Activated T-helper 1 cell treated with anti-CD3 and anti-CD28 coated beads, Interleukin-12 subunit alpha, Interleukin-12 subunit beta, Interleukin-2, Interleukin-4 antibody, amounts not matched to agents 30 ng/mL and 10 ng/mL and 1 ng/mL, durations not matched to agents 14 hours and 24 hours and 36 hours (primary cell): ENCODE measurements at regions of chr20 and their contacts with region 1.

Region 1: GRCh38 chr20:49610701-49611538 is 43.0 kb upstream of the PTGIS start:
- DNase-seq: peak; percentile 75
- H3K4me3 Mint-ChIP-seq: peak overlapping the region; percentile 73
- H3K27ac Mint-ChIP-seq: peak overlapping the region; percentile 56
- H3K4me1 Mint-ChIP-seq: peaks cover 32% of the 10 kb centered on the region
- H3K27me3 Mint-ChIP-seq: no peaks in the 10 kb centered on the region

Region 2: GRCh38 chr20:49484180-49485140 is 126.5 kb before region 1 on chr20:
- intact Hi-C with region 1: loop called (anchors 5 kb)
- DNase-seq: peak; percentile 67
- H3K4me3 Mint-ChIP-seq: peak overlapping the region; percentile 85
- H3K27ac Mint-ChIP-seq: peak overlapping the region; percentile 66
- H3K4me1 Mint-ChIP-seq: peaks cover 9% of the 10 kb centered on the region
- H3K27me3 Mint-ChIP-seq: peaks cover 48% of the 10 kb centered on the region

Region 3: DNA sequence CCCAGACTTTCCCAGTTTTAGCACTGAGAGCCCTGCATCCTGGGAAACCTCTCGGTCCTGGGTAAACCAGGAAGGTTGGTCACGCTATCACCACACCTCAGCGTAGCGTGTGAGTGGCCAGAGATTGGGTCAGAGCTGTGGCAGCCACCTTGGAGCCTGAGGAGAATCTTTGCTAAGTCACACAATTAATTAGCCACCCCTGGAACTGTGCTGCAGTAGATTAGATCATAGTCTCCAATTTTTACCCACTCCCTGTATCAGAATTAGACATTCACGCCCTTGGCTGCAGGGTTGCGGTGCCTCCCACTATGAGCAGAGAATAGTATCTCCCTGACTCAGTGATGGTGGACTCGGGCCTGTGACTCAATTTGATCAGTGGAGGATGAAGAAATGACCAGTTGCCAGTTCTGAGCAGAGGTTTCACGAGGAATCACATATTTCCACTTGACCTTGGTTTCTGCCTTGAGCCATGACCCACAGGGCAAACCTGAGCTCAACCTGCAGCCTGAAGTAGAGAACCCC is 37.0 kb before region 1 on chr20:
- intact Hi-C with region 1: loop called (anchors 5 kb)
- DNase-seq: no peak
- H3K4me3 Mint-ChIP-seq: no peak overlapping the region
- H3K27ac Mint-ChIP-seq: peak overlapping the region; percentile 87
- H3K4me1 Mint-ChIP-seq: peaks cover 61% of the 10 kb centered on the region
- H3K27me3 Mint-ChIP-seq: peaks cover 18% of the 10 kb centered on the region

Region 4: GRCh38 chr20:49713753-49714712 is 103.1 kb after region 1 on chr20 and contains the start of gene B4GALT5:
- intact Hi-C with region 1: loop called (anchors 5 kb)
- DNase-seq: peak; percentile 60
- H3K4me3 Mint-ChIP-seq: peak within 1 kb of the TSS; percentile 92
- H3K27ac Mint-ChIP-seq: peak within 1 kb of the TSS; percentile 94
- H3K4me1 Mint-ChIP-seq: peaks cover 49% of the 10 kb centered on the region
- H3K27me3 Mint-ChIP-seq: peaks cover 5% of the 10 kb centered on the region
- total RNA-seq, gene B4GALT5: 38.9 and 39.3 TPM in 2 replicates

Region 5: GRCh38 chr20:49821870-49822331 is 211.0 kb after region 1 on chr20:
- intact Hi-C with region 1: loop called (anchors 1 kb)
- DNase-seq: no peak
- H3K4me3 Mint-ChIP-seq: peak overlapping the region; percentile 40
- H3K27ac Mint-ChIP-seq: peak overlapping the region; percentile 21
- H3K4me1 Mint-ChIP-seq: peaks cover 63% of the 10 kb centered on the region
- H3K27me3 Mint-ChIP-seq: no peaks in the 10 kb centered on the region

Region 6: GRCh38 chr20:49888345-49888966 is 277.5 kb after region 1 on chr20:
- intact Hi-C with region 1: loop called (anchors 1 kb)
- DNase-seq: peak; percentile 17
- H3K4me3 Mint-ChIP-seq: no peak overlapping the region
- H3K27ac Mint-ChIP-seq: peak overlapping the region; percentile 40
- H3K4me1 Mint-ChIP-seq: peaks cover 21% of the 10 kb centered on the region
- H3K27me3 Mint-ChIP-seq: no peaks in the 10 kb centered on the region

Region 7: GRCh38 chr20:49928401-49929141 is 317.7 kb after region 1 on chr20:
- intact Hi-C with region 1: loop called (anchors 1 kb)
- DNase-seq: peak; percentile 69
- H3K4me3 Mint-ChIP-seq: no peak overlapping the region
- H3K27ac Mint-ChIP-seq: peak overlapping the region; percentile 36
- H3K4me1 Mint-ChIP-seq: peaks cover 11% of the 10 kb centered on the region
- H3K27me3 Mint-ChIP-seq: peaks cover 11% of the 10 kb centered on the region